ENCODE measurements at regions of chr18 and their contacts with region 1.

Region 1: GRCh38 chr18:63253428-63254372 is 65.9 kb downstream of the BCL2 start:
- DNase-seq: no peak
- ATAC-seq: no peak
- H3K4me3 Mint-ChIP-seq: no peak overlapping the region
- H3K27ac Mint-ChIP-seq: peak overlapping the region; percentile 7
- H3K4me1 Mint-ChIP-seq: peaks cover 58% of the 10 kb centered on the region
- H3K27me3 Mint-ChIP-seq: no peaks in the 10 kb centered on the region
- CTCF ChIP-seq: no peak

Region 2: GRCh38 chr18:62437235-62438017 is 816.3 kb before region 1 on chr18:
- CTCF ChIA-PET with region 1: no interaction called
- POLR2A ChIA-PET with region 1: no interaction called
- intact Hi-C with region 1: no loop called
- DNase-seq: no peak
- ATAC-seq: no peak
- H3K4me3 Mint-ChIP-seq: no peak overlapping the region
- H3K27ac Mint-ChIP-seq: no peak overlapping the region
- H3K4me1 Mint-ChIP-seq: no peaks in the 10 kb centered on the region
- H3K27me3 Mint-ChIP-seq: peaks cover 8% of the 10 kb centered on the region
- CTCF ChIP-seq: no peak

Region 3: GRCh38 chr18:63216516-63217311 is 37.0 kb before region 1 on chr18:
- CTCF ChIA-PET with region 1: no interaction called
- POLR2A ChIA-PET with region 1: no interaction called
- intact Hi-C with region 1: loop called (anchors 5 kb)
- DNase-seq: no peak
- ATAC-seq: no peak
- H3K4me3 Mint-ChIP-seq: no peak overlapping the region
- H3K27ac Mint-ChIP-seq: peak overlapping the region; percentile 52
- H3K4me1 Mint-ChIP-seq: peaks cover 70% of the 10 kb centered on the region
- H3K27me3 Mint-ChIP-seq: no peaks in the 10 kb centered on the region
- CTCF ChIP-seq: no peak

Region 4: DNA sequence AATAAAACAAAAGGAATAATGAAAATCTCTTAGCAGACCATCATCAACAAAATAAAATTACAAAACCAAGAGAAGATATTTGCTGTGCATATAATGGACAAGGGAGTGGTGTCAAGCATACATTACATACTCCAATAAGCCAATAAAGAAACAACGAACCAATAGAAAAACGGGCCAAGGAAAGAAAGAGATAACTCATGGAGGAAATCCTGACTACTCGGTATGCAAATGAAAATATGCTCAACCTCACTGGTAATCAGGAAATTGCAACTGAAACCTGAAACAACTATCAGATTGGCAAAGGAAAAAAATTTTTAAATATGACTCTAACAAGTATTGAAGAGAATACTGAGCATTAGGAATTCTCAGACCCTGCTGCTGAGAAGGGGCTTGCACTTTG is 18.9 kb before region 1 on chr18:
- CTCF ChIA-PET with region 1: no interaction called
- POLR2A ChIA-PET with region 1: no interaction called
- intact Hi-C with region 1: loop called (anchors 2 kb)
- DNase-seq: no peak
- ATAC-seq: no peak
- H3K4me3 Mint-ChIP-seq: peak overlapping the region; percentile 42
- H3K27ac Mint-ChIP-seq: peak overlapping the region; percentile 38
- H3K4me1 Mint-ChIP-seq: peaks cover 59% of the 10 kb centered on the region
- H3K27me3 Mint-ChIP-seq: no peaks in the 10 kb centered on the region
- CTCF ChIP-seq: no peak

Region 5: GRCh38 chr18:63284827-63285733 is 31.4 kb after region 1 on chr18:
- CTCF ChIA-PET with region 1: no interaction called
- POLR2A ChIA-PET with region 1: interaction called, 3 read pairs
- intact Hi-C with region 1: loop called (anchors 5 kb)
- DNase-seq: peak; percentile 28
- ATAC-seq: peak; percentile 86
- H3K4me3 Mint-ChIP-seq: peak overlapping the region; percentile 81
- H3K27ac Mint-ChIP-seq: no peak overlapping the region
- H3K4me1 Mint-ChIP-seq: peaks cover 21% of the 10 kb centered on the region
- H3K27me3 Mint-ChIP-seq: no peaks in the 10 kb centered on the region
- CTCF ChIP-seq: no peak

Region 6: DNA sequence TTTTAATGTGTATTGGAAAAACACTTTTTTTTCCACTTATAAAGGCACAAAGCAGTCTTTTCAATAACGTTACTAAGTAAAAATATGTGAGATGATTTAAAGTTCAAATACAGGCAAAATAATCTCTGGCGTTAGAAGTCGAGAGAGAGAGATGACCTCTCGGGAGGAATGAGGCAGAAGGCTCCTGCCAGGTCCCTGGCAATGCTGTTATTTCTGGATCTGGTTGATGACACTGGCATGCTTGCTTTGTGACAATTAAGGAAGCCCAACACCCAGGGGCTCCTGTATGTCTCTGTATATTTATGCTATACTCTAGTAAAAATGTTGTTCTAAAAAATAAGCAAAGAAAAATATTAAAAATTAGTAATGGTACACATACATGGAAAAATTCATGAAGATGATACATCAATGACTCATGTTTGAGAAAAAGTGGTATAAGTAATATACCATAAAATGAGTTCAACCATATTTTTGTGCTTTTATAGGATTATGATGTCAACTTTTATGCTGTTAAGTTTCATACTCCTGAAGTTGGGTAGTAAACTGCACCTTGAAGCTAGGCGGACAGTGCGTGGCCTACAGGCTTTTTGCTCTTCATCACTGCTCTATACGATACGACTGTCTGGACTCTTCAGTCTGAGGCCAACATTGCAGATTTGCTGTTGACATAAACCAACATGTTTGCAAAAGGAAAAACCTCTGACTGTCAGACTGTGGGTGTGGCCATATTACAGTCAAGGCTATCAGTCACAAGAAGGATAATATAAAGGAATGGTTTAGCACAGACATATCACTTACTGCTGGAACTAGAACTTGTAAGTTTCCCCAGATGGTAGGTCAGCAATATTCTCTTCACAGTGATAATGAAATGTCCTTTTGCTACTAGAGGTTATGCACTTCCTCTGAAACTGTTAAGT is 148.8 kb after region 1 on chr18:
- CTCF ChIA-PET with region 1: no interaction called
- POLR2A ChIA-PET with region 1: no interaction called
- intact Hi-C with region 1: no loop called
- DNase-seq: no peak
- ATAC-seq: no peak
- H3K4me3 Mint-ChIP-seq: no peak overlapping the region
- H3K27ac Mint-ChIP-seq: no peak overlapping the region
- H3K4me1 Mint-ChIP-seq: peaks cover 4% of the 10 kb centered on the region
- H3K27me3 Mint-ChIP-seq: no peaks in the 10 kb centered on the region
- CTCF ChIP-seq: no peak

Measured in activated B cell treated with CpG ODN at 0.5 μM for 24 hours (primary cell).